Right ventricle myocardium inferior (tissue), 1 donor: ENCODE measurements at regions of chr6 and their contacts with region 1.

Region 1: DNA sequence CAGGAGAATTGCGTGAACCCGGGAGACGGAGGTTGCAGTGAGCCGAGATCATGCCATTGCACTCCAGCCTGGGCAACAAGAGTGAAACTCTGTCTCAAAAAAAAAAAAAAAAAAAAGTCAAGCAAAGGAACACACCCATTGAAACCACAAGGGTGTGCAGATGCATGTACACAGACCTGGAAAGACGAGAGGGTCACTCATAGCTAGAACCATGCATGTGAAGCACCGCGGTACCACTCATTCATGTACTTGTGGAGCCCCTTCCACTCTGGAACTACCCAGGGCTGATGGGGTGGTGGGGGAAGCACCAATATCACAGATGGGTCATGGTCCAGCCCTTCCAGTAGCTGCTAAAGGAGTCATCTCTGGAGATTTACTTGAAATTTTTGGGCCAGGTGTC is 7.4 kb upstream of the TJAP1 start:
- DNase-seq: no peak
- ATAC-seq: no peak

Region 2: GRCh38 chr6:43496370-43497128 is 26.6 kb after region 1 on chr6:
- intact Hi-C with region 1: loop called (anchors 2 kb)
- DNase-seq: no peak
- ATAC-seq: no peak

Region 3: DNA sequence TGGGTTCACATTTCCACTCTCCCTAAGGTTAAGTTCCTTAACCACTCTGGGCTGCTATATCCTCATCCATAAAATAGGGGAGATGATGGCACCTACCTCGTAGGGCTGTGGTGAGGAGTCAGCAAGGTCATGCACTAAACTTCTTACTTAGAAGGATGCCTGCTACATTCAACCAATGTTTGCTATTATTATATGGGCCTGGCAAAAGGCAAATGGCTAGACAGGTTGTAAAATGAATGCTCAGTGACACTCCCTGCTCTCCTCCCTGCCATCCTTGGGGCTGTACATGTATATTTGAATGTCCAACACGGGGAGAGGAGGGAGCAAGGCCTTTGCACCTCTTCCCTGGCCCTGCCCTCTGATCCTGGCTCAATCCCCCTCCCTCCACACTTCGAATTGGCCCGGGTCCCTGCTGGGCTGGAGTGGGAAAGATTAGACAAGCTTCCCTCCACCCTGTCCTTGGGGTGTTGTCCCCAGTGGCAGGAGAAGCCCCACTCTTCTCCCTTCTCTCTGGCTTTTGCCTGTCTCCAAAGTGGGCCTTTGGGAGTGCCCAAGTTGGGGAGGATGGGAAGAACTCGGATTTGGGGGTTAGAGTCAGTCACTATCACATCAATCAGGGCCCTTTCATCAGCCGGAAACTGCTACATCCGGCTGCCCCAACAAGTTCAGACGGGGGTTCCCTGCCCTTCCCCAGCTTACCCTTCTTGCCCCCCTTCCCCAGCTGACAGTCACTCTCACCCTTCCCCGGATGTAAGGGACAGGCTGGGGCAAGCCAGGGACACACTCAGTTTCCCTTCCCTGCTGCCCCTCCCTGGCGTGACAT is 263.7 kb after region 1 on chr6:
- intact Hi-C with region 1: no loop called
- DNase-seq: no peak
- ATAC-seq: no peak